ENCODE measurements at regions of chr1 and their contacts with region 1.

Region 1: GRCh38 chr1:203861379-203862184 is at the start of gene SNRPE:
- DNase-seq: peak; percentile 93 to 98 (median 97)
- ATAC-seq: peak; percentile 100
- H3K4me3 ChIP-seq: peak within 1 kb of the TSS; percentile 82
- H3K4me3 Mint-ChIP-seq: peak within 1 kb of the TSS; percentile 97 to 100 (median 99)
- H3K27ac ChIP-seq: peak within 1 kb of the TSS; percentile 89
- H3K27ac Mint-ChIP-seq: peak within 1 kb of the TSS; percentile 95 to 100 (median 98)
- H3K4me1 ChIP-seq: peaks cover 10 to 13% of the 10 kb centered on the region in 2 donors
- H3K4me1 Mint-ChIP-seq: peaks cover 11 to 34% (median 23%) of the 10 kb centered on the region in 7 donors
- H3K27me3 ChIP-seq: no peaks in the 10 kb centered on the region
- H3K27me3 Mint-ChIP-seq: no peaks in the 10 kb centered on the region
- total RNA-seq, gene SNRPE: 54.4 to 156 (median 81.7) TPM

Region 2: GRCh38 chr1:202957733-202958543 is 903.6 kb before region 1 on chr1 and contains the start of gene ADIPOR1:
- CTCF ChIA-PET with region 1: no interaction called
- POLR2A ChIA-PET with region 1: interaction called, 3 read pairs
- intact Hi-C with region 1: loop called in 1 of 2 experiments (anchors 1 kb)
- DNase-seq: peak; percentile 88 to 96 (median 94)
- ATAC-seq: peak; percentile 99
- H3K4me3 ChIP-seq: peak within 1 kb of the TSS; percentile 84
- H3K4me3 Mint-ChIP-seq: peak within 1 kb of the TSS; percentile 76 to 97 (median 92)
- H3K27ac ChIP-seq: peak within 1 kb of the TSS; percentile 95
- H3K27ac Mint-ChIP-seq: peak within 1 kb of the TSS; percentile 86 to 98 (median 95)
- H3K4me1 ChIP-seq: peaks cover 19 to 39% of the 10 kb centered on the region in 2 donors
- H3K4me1 Mint-ChIP-seq: peaks cover 20 to 55% (median 52%) of the 10 kb centered on the region in 7 donors
- H3K27me3 ChIP-seq: no peaks in the 10 kb centered on the region
- H3K27me3 Mint-ChIP-seq: no peaks in the 10 kb centered on the region
- total RNA-seq, gene ADIPOR1: 51.9 to 84.5 (median 69.6) TPM

Region 3: GRCh38 chr1:203069030-203069747 is 792.4 kb before region 1 on chr1:
- CTCF ChIA-PET with region 1: no interaction called
- POLR2A ChIA-PET with region 1: no interaction called
- intact Hi-C with region 1: no loop called
- DNase-seq: no peak
- ATAC-seq: peak; percentile 54
- H3K4me3 ChIP-seq: no peak overlapping the region
- H3K4me3 Mint-ChIP-seq: no peak overlapping the region
- H3K27ac ChIP-seq: no peak overlapping the region
- H3K27ac Mint-ChIP-seq: no peak overlapping the region
- H3K4me1 ChIP-seq: no peaks in the 10 kb centered on the region
- H3K4me1 Mint-ChIP-seq: peaks cover 0 to 3% (median 0%) of the 10 kb centered on the region in 7 donors
- H3K27me3 ChIP-seq: no peaks in the 10 kb centered on the region
- H3K27me3 Mint-ChIP-seq: peaks cover 0 to 19% (median 13%) of the 10 kb centered on the region in 5 donors

Region 4: DNA sequence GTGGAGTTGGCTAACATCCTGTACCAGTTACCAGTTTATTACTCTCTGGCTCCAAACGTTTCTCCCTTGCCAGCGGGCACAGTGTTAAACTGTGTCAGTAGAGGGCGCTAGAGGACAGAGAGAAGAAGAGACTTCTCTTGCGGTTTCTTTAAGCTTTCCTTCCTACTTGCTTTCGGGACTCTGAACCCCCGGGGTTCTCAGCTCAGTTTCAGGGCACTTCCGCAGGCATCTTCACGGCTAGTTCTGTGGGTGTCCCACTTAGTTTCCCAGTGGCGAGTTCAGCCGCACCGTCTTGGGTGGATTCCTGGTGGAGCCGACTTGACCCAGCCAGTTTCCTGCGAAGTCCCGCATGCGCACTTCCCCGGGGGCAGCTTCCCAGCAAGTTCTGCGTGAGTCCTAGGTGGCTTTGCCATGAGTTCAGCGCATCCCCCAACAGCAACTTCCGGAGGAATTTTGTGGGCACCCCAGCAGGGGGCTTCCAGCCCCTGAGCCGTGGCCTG is 594.2 kb before region 1 on chr1:
- CTCF ChIA-PET with region 1: no interaction called
- POLR2A ChIA-PET with region 1: no interaction called
- intact Hi-C with region 1: loop called in 1 of 2 experiments (anchors 2 kb)
- DNase-seq: peak; percentile 49 to 89 (median 84)
- ATAC-seq: peak; percentile 80
- H3K4me3 ChIP-seq: peak overlapping the region; percentile 82
- H3K4me3 Mint-ChIP-seq: peak overlapping the region; percentile 76 to 94 (median 90)
- H3K27ac ChIP-seq: peak overlapping the region; percentile 86
- H3K27ac Mint-ChIP-seq: peak overlapping the region in 8 of 9 donors; percentile 80 to 95 (median 92)
- H3K4me1 ChIP-seq: peaks cover 10 to 26% of the 10 kb centered on the region in 2 donors
- H3K4me1 Mint-ChIP-seq: peaks cover 12 to 27% (median 24%) of the 10 kb centered on the region in 7 donors
- H3K27me3 ChIP-seq: no peaks in the 10 kb centered on the region
- H3K27me3 Mint-ChIP-seq: peaks cover 0 to 14% (median 0%) of the 10 kb centered on the region in 5 donors

Region 5: DNA sequence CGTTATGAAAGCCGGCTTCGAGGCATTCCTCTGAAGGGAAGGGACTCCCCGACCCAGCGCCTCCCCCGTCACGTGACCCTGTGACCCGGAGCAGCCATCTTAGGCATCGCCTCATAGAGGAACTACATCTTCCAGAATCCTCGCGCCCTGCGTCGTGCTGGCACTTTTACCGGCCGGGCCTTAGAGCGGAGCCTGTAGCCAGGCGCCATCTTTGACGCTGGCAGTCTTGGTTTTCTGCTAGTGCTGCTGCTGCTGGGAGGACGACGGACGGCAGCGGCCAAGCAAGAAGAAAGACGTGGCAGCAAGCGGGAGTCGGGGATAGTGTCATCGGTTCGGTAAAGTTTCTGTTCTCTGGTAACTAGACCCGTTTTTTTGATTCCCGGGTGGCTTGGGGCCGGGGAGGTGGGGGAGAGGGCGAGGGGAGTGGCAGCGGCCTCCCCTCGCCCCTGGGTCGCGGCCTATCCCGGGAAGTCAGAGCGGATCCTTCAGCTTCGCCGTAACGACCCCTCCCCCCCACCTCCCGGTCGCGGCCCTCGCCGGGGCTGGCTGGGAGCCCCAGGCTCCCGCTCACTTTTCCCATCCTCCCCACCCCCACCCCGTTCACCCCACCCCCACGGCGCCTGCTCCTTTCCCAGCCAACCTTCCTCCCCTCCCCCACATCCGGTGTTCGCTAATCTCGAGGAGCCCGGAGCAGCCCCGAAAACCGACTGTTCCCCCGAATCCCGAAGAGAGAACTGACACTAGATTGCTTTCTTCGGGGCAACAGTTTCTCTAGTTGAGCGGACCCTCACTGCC is 65.9 kb before region 1 on chr1 and contains the starts of genes ZBED6 and ZC3H11A:
- CTCF ChIA-PET with region 1: no interaction called
- POLR2A ChIA-PET with region 1: no interaction called
- intact Hi-C with region 1: loop called (anchors 1 kb)
- DNase-seq: peak; percentile 85 to 100 (median 97)
- ATAC-seq: peak; percentile 99
- H3K4me3 ChIP-seq: peak within 1 kb of the TSS; percentile 80
- H3K4me3 Mint-ChIP-seq: peak within 1 kb of the TSS; percentile 94 to 98 (median 96)
- H3K27ac ChIP-seq: peak within 1 kb of the TSS; percentile 80
- H3K27ac Mint-ChIP-seq: peak within 1 kb of the TSS; percentile 82 to 98 (median 96)
- H3K4me1 ChIP-seq: peaks cover 35 to 36% of the 10 kb centered on the region in 2 donors
- H3K4me1 Mint-ChIP-seq: peaks cover 18 to 55% (median 48%) of the 10 kb centered on the region in 7 donors
- H3K27me3 ChIP-seq: no peaks in the 10 kb centered on the region
- H3K27me3 Mint-ChIP-seq: no peaks in the 10 kb centered on the region
- total RNA-seq, gene ZBED6: 23.8 to 36.1 (median 31.9) TPM
- total RNA-seq, gene ZC3H11A: 70.9 to 138 (median 91.6) TPM

Region 6: DNA sequence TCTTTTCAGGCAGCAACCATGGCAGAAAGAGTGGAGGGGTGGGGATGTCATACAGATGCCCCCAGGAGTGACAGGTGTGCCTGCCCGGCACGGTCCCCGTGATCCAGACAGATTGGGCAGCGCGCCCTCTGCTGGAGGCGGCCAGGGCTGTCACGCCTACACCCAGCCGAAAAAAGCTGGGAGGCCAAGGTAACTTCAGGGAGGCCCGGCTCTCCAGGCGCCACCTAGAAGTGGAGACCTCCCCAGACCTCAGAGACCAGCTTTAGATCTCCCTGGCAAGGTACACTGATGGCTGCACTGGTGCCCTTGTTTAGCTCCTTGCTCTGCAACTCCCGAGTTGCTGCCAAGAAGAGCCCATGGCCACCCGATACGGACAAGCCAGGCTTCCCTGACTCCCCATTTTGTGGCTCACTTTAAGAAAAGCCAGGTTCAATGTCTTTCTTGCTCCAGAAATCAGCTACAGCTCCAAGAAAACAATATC is 345.6 kb after region 1 on chr1:
- CTCF ChIA-PET with region 1: interaction called, 3 read pairs
- POLR2A ChIA-PET with region 1: no interaction called
- intact Hi-C with region 1: loop called (anchors 1 kb)
- DNase-seq: peak; percentile 38 to 81 (median 64)
- ATAC-seq: peak; percentile 93
- H3K4me3 ChIP-seq: no peak overlapping the region
- H3K4me3 Mint-ChIP-seq: peak overlapping the region in 1 of 10 donors; percentile 45
- H3K27ac ChIP-seq: no peak overlapping the region
- H3K27ac Mint-ChIP-seq: no peak overlapping the region
- H3K4me1 ChIP-seq: peaks cover 0 to 4% of the 10 kb centered on the region in 2 donors
- H3K4me1 Mint-ChIP-seq: peaks cover 3 to 19% (median 15%) of the 10 kb centered on the region in 7 donors
- H3K27me3 ChIP-seq: no peaks in the 10 kb centered on the region
- H3K27me3 Mint-ChIP-seq: peaks cover 25 to 40% (median 33%) of the 10 kb centered on the region in 5 donors

Region 7: GRCh38 chr1:204398217-204399081 is 536.9 kb after region 1 on chr1:
- CTCF ChIA-PET with region 1: no interaction called
- POLR2A ChIA-PET with region 1: no interaction called
- intact Hi-C with region 1: loop called in 1 of 2 experiments (anchors 5 kb)
- DNase-seq: peak in 8 of 9 donors; percentile 44 to 74 (median 66)
- ATAC-seq: peak; percentile 92
- H3K4me3 ChIP-seq: no peak overlapping the region
- H3K4me3 Mint-ChIP-seq: no peak overlapping the region
- H3K27ac ChIP-seq: peak overlapping the region; percentile 54
- H3K27ac Mint-ChIP-seq: peak overlapping the region; percentile 55 to 91 (median 80)
- H3K4me1 ChIP-seq: no peaks in the 10 kb centered on the region
- H3K4me1 Mint-ChIP-seq: peaks cover 4 to 21% (median 8%) of the 10 kb centered on the region in 7 donors
- H3K27me3 ChIP-seq: no peaks in the 10 kb centered on the region
- H3K27me3 Mint-ChIP-seq: no peaks in the 10 kb centered on the region

Region 8: DNA sequence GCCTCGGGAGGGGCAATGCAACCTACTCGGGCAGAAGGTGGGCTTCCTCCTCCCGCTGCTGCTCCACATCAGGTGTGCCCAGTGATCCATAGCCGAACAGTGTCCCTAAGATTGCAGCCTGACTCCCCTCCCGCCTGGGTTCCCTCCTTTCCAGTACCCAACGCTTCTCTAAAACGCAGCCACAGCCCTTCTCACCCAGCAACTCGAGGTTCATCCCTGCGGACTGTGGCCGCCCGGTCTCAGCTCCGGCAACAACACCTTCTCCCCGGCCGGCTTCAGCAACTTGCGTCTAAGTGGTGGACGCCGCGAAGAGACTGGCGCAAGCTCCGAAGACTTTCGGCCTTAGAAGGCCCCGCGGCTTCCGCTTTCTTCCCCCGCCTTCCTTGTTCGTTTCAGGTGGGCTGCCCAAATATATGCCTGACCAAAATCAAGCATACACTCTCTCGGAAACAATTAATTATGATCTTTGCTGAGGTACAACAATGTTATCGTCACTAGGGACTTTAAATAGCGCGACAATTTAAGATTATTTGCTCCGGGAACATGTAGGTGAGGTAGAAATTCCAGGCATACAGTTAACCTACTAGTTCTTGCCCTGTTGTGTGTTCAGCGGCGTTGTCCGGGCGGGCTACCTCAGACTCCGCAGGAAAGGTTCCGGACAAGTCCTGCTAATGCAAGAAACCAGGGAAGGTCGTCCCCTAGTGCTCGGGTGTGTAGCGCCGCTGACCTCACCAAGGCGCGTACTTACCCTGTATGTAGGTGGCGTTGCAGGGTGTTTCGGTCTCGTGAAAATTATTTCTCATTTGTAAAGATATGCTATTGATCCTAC is 1260.3 kb after region 1 on chr1 and contains the start of gene RBBP5:
- CTCF ChIA-PET with region 1: no interaction called
- POLR2A ChIA-PET with region 1: no interaction called
- intact Hi-C with region 1: loop called in 1 of 2 experiments (anchors 1 kb)
- DNase-seq: peak; percentile 87 to 97 (median 93)
- ATAC-seq: peak; percentile 98
- H3K4me3 ChIP-seq: peak within 1 kb of the TSS; percentile 89
- H3K4me3 Mint-ChIP-seq: peak within 1 kb of the TSS; percentile 89 to 99 (median 96)
- H3K27ac ChIP-seq: peak within 1 kb of the TSS; percentile 86
- H3K27ac Mint-ChIP-seq: peak within 1 kb of the TSS; percentile 98 to 100 (median 99)
- H3K4me1 ChIP-seq: peaks cover 18 to 24% of the 10 kb centered on the region in 2 donors
- H3K4me1 Mint-ChIP-seq: peaks cover 30 to 56% (median 51%) of the 10 kb centered on the region in 7 donors
- H3K27me3 ChIP-seq: no peaks in the 10 kb centered on the region
- H3K27me3 Mint-ChIP-seq: no peaks in the 10 kb centered on the region
- total RNA-seq, gene RBBP5: 11.0 to 31.5 (median 21.0) TPM

Measured in naive thymus-derived CD4-positive, alpha-beta T cell (primary cell).